ENCODE measurements at regions of chr2 and their contacts with region 1.

Region 1: DNA sequence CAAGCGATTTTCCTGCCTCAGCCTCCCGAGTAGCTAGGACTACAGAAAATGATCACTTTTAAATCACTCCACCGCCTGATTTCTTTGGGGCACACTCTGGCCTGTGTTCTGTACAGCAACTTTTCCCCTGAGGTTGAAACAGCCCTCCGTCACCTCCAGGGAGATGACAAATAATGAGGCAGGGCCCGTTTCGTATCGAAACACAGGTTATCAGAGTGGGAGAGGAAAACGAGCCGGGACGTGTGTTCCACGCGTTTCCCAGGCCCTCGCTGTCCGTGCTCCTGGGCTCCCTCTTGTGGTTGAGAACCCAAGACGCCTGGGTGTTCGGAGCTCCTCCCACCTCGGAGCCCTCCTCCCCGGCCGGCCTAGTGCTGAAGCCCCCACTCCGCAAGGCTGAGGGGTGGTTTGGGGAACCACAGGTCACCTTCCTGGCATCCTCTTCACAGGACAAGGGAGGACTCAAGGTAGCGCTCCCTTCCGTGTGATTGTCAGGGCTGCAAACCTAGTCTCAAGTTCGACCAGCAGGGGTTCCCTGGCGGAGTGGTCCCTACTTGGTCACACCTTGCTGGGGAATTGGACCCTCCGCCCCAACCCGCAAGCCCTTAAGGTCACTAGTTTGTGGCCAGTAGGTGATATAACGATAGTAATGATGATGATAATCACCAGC is 12.8 kb downstream of the ATP6V1B1 start:
- DNase-seq: peak; percentile 81 to 87 (median 84)
- ATAC-seq: peak; percentile 91
- H3K4me3 ChIP-seq: no peak overlapping the region
- H3K27ac ChIP-seq: peak overlapping the region in 1 of 4 donors; percentile 21
- H3K4me1 ChIP-seq: peaks cover 11% of the 10 kb centered on the region
- H3K27me3 ChIP-seq: no peaks in the 10 kb centered on the region
- CTCF ChIP-seq: peak; percentile 78 to 89 (median 85)
- POLR2A ChIP-seq: no peak

Region 2: GRCh38 chr2:70789304-70790135 is 158.9 kb before region 1 on chr2:
- intact Hi-C with region 1: loop called (anchors 10 kb)
- DNase-seq: peak; percentile 70 to 82 (median 76)
- ATAC-seq: peak; percentile 85
- H3K4me3 ChIP-seq: no peak overlapping the region
- H3K27ac ChIP-seq: no peak overlapping the region
- H3K4me1 ChIP-seq: peaks cover 19% of the 10 kb centered on the region
- H3K27me3 ChIP-seq: peaks cover 0 to 7% of the 10 kb centered on the region in 2 donors
- CTCF ChIP-seq: peak; percentile 45 to 78 (median 59)
- POLR2A ChIP-seq: no peak

Region 3: DNA sequence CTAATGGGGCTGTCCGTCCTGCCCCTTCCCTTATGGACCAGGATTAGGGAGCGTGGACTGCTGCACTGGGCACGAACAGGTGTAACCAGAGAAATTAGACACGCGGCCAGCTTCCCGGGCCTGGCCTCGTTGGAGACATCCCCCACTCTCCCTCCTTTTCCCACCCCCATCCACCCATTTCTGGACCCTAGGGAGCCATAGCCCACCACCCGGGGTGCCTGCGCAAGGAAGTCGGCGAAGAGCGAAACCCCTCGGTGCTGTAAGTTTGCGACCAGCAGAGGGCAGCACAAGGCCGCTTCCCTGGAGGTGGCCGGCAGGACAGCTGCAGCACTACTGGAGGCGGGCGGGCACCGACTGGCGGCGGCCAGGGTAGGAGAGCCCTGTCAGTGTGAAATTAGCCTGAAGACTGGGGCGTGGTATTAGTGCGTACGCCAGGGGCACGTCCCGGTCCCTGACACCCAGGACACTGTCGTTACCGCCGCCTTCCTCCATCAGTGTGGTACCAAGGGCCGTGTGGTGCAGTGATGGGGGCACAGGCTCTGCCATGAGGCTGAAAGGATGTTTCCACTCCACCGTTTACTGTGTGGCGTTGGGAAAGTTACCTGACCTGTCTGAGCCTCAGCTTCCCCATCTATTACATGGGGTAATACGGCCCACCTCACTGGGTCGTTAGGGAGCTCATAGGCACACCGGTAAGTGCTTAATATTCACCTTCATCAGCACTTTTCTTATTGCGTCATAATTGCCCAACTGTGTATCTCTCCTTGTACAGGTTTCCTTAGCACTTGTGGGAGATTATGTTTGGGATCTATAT is 76.9 kb before region 1 on chr2:
- intact Hi-C with region 1: loop called (anchors 5 kb)
- DNase-seq: peak; percentile 88 to 92 (median 92)
- ATAC-seq: peak; percentile 98
- H3K4me3 ChIP-seq: no peak overlapping the region
- H3K27ac ChIP-seq: no peak overlapping the region
- H3K4me1 ChIP-seq: peaks cover 10% of the 10 kb centered on the region
- H3K27me3 ChIP-seq: no peaks in the 10 kb centered on the region
- CTCF ChIP-seq: peak; percentile 83 to 99 (median 96)
- POLR2A ChIP-seq: no peak

Region 4: GRCh38 chr2:71402417-71402816 is 453.9 kb after region 1 on chr2:
- intact Hi-C with region 1: no loop called
- DNase-seq: no peak
- ATAC-seq: no peak
- H3K4me3 ChIP-seq: no peak overlapping the region
- H3K27ac ChIP-seq: no peak overlapping the region
- H3K4me1 ChIP-seq: no peaks in the 10 kb centered on the region
- H3K27me3 ChIP-seq: no peaks in the 10 kb centered on the region
- CTCF ChIP-seq: no peak
- POLR2A ChIP-seq: no peak